ENCODE measurements at regions of chr6 and their contacts with region 1.

Region 1: GRCh38 chr6:129353067-129353466 is 356.9 kb downstream of the ARHGAP18 start:
- DNase-seq: no peak
- H3K4me3 ChIP-seq: no peak overlapping the region
- H3K27ac ChIP-seq: no peak overlapping the region
- H3K4me1 ChIP-seq: no peaks in the 10 kb centered on the region
- H3K27me3 ChIP-seq: no peaks in the 10 kb centered on the region
- CTCF ChIP-seq: no peak
- POLR2A ChIP-seq: no peak

Region 2: DNA sequence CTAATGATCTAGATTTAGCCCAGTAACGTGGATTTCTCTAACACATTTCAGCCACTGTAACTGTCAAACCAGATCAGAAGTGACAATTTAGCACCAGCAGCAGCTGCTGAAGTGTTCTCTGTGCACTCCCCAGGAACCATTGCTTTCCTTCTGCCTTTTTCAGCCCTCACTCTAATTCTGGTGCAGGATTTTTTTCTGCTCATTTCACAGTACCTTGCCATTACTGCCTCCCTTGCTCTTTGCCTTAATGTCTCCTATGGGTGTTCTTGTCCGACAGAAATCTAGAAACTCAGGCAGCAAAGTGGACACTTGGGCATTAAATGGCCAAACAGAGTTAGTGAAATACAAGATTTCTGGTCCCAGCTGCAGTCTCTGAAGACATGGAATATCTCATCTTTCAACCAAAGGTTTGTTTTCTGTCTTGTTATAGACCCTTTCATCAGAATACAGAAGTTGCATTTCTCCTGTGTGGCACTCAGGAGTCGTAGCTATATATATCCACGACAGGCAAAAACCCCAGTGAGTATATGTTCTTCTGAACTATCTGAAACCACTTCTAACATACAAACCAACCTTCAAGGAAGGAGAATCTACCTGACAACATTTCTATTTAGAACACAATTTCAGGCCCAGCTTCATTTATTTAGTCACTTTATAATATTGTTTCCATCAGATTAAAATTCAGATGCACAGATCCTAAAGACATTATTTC is 1545.1 kb before region 1 on chr6:
- intact Hi-C with region 1: loop called (anchors 5 kb)
- DNase-seq: no peak
- H3K4me3 ChIP-seq: no peak overlapping the region
- H3K27ac ChIP-seq: no peak overlapping the region
- H3K4me1 ChIP-seq: no peaks in the 10 kb centered on the region
- H3K27me3 ChIP-seq: no peaks in the 10 kb centered on the region
- CTCF ChIP-seq: no peak
- POLR2A ChIP-seq: no peak

Region 3: DNA sequence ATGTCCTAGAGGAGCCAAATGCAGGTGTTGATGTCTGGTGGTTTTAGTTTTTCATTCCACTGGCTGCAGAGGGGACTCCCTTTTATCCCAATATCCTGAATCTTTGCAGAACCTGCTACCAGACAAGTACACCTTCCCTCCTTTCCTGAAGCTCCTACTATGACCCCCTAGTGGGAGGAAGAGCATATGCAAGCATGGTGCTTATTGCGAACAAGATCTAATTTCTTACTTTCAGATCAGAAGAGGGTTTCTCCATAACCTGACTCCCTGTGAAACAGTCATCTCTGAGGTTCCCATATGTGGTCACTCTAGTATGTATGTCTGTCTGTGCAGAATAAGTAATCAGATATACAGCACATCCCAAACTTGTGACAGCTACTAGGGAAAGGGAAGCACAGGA is 79.7 kb after region 1 on chr6:
- intact Hi-C with region 1: no loop called
- DNase-seq: no peak
- H3K4me3 ChIP-seq: no peak overlapping the region
- H3K27ac ChIP-seq: no peak overlapping the region
- H3K4me1 ChIP-seq: no peaks in the 10 kb centered on the region
- H3K27me3 ChIP-seq: no peaks in the 10 kb centered on the region
- CTCF ChIP-seq: no peak
- POLR2A ChIP-seq: no peak

Measured in vagina (tissue), 2 donors.